ENCODE measurements at regions of chr18 and their contacts with region 1.

Region 1: DNA sequence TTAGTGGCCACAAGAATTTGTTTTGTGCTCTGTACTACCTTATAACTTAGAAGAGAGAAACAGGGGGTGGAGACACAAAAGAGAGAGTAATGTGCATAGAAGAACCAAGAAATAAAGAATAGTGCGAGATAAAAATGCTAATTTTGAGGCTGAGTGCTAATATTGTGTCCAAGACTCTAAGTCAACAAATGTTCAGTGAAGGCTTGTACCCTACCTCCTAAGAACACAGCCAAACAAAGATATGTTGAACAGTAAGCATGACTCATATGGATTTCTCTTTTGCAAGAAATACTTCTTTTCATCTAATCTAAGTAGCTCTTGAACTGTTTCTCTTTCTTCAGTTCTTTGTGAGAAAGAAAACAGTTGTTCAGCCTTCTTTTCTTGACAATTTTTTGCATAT is 45.2 kb downstream of the GAREM1 start:
- DNase-seq: no peak

Region 2: DNA sequence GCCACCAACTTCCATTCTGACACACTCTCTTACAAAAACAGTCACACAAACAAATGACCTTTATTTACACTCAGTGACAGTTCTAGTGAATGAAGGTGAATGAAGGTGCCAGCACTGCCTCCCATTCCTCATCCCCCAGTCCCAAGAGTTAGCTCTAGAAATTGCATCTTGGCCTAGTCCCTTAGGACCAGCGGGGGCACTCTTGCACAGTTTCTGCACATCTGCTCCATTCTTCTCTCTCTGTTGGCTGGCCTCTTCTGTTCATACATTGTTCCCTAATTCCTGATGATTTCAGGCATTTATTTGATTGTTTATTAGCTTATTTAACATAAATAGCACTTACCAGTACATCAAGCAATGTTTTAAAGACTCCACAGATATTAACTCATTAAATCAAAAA is 14.3 kb after region 1 on chr18:
- CTCF ChIA-PET with region 1: interaction called, 10 read pairs
- POLR2A ChIA-PET with region 1: no interaction called
- DNase-seq: peak; percentile 76

Region 3: GRCh38 chr18:32607816-32608215 is 182.3 kb after region 1 on chr18:
- CTCF ChIA-PET with region 1: no interaction called
- POLR2A ChIA-PET with region 1: no interaction called
- DNase-seq: no peak

Measured in HEK293T (cell line).